Mucosa of descending colon (tissue), 3 donors: ENCODE measurements at regions of chr3 and their contacts with region 1.

Region 1: DNA sequence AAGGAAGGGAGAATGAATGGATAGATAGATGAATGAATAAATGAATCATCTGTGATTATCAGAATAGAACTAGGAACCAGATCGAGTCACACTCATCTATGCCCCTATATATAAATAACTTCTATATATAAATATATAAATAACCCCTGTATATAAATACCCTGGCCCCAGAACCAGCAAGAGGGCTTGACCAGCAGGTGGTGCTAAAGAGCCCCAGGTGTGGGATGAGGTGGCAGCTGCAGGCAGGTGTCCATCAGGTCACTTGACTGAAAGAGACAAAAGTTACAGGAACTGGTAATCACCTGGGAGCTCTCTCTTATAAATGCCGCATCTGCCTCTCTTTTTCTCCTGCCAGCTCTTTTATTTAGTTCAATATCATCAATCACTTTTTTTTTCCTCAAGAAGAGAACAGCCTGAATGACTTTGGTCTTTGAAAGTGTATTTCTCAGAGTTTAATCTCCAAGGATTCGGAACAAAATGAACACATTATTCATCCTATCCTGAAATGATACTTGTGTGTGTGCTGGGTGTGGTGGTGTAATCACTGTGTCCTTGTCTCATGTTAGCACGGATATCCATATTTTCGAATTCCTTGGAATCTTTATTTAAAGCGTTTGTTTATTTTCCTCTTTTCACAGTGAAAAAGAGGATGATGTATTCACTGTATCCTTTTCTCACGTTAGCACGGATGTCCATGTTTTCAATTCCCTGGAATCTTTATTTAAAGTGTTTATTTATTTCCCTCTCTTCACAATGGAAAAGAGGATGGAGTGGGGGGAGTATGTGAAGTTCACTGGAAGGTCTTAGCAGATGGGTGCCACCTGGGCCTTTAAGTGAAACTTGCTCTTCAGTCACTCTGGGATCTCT is 35.4 kb upstream of the ATG7 start:
- DNase-seq: peak; percentile 68 to 93 (median 86)
- ATAC-seq: peak; percentile 97
- H3K4me3 ChIP-seq: no peak overlapping the region
- H3K4me1 ChIP-seq: no peaks in the 10 kb centered on the region
- CTCF ChIP-seq: peak; percentile 76

Region 2: GRCh38 chr3:11168881-11169805 is 67.7 kb before region 1 on chr3:
- intact Hi-C with region 1: no loop called
- DNase-seq: no peak
- ATAC-seq: no peak
- H3K4me3 ChIP-seq: no peak overlapping the region
- H3K4me1 ChIP-seq: peaks cover 6% of the 10 kb centered on the region
- CTCF ChIP-seq: no peak

Region 3: GRCh38 chr3:11335056-11335608 is 98.3 kb after region 1 on chr3:
- intact Hi-C with region 1: loop called in 1 of 2 experiments (anchors 5 kb)
- DNase-seq: peak in 1 of 3 donors; percentile 66
- ATAC-seq: peak; percentile 73
- H3K4me3 ChIP-seq: no peak overlapping the region
- H3K4me1 ChIP-seq: no peaks in the 10 kb centered on the region
- CTCF ChIP-seq: peak; percentile 38

Region 4: GRCh38 chr3:11438646-11439045 is 201.8 kb after region 1 on chr3:
- intact Hi-C with region 1: no loop called
- DNase-seq: no peak
- ATAC-seq: no peak
- H3K4me3 ChIP-seq: no peak overlapping the region
- H3K4me1 ChIP-seq: no peaks in the 10 kb centered on the region
- CTCF ChIP-seq: no peak